ENCODE measurements at regions of chr6 and their contacts with region 1.

Region 1: GRCh38 chr6:18595774-18596530 is 208.8 kb downstream of the RNF144B start:
- DNase-seq: no peak
- ATAC-seq: peak; percentile 83

Region 2: GRCh38 chr6:20056350-20056992 is 1460.5 kb after region 1 on chr6:
- intact Hi-C with region 1: loop called (anchors 5 kb)
- DNase-seq: no peak
- ATAC-seq: no peak

Measured in Right ventricle myocardium inferior (tissue), 1 donor.